PC-3 (cell line): ENCODE measurements at regions of chr5 and their contacts with region 1.

Region 1: GRCh38 chr5:113294311-113295110 is 140.3 kb downstream of the TSSK1B start:
- DNase-seq: peak; percentile 73
- ATAC-seq: peak; percentile 90
- H3K4me3 ChIP-seq: peak overlapping the region; percentile 73
- H3K27ac ChIP-seq: no peak overlapping the region
- H3K4me1 ChIP-seq: peaks cover 7% of the 10 kb centered on the region; the same call in 1 of the 2 replicates
- H3K27me3 ChIP-seq: no peaks in the 10 kb centered on the region
- CTCF ChIP-seq: peak; percentile 40; the same call in 1 of the 2 replicates

Region 2: GRCh38 chr5:113232667-113233066 is 61.8 kb before region 1 on chr5:
- CTCF ChIA-PET with region 1: no interaction called
- POLR2A ChIA-PET with region 1: no interaction called
- intact Hi-C with region 1: loop called (anchors 5 kb)
- DNase-seq: peak; percentile 21
- ATAC-seq: 0 out of 2 replicates have a peak, but pooled peaks have one; percentile 15
- H3K4me3 ChIP-seq: no peak overlapping the region
- H3K27ac ChIP-seq: no peak overlapping the region
- H3K4me1 ChIP-seq: peaks cover 29% of the 10 kb centered on the region
- H3K27me3 ChIP-seq: 0 out of 2 replicates have a peak, but pooled peaks cover 5% of the 10 kb centered on the region
- CTCF ChIP-seq: no peak

Region 3: GRCh38 chr5:113311301-113311700 is 16.8 kb after region 1 on chr5:
- CTCF ChIA-PET with region 1: no interaction called
- POLR2A ChIA-PET with region 1: interaction called, 14 read pairs
- intact Hi-C with region 1: no loop called
- DNase-seq: no peak
- ATAC-seq: no peak
- H3K4me3 ChIP-seq: no peak overlapping the region
- H3K27ac ChIP-seq: no peak overlapping the region
- H3K4me1 ChIP-seq: peaks cover 13% of the 10 kb centered on the region
- H3K27me3 ChIP-seq: no peaks in the 10 kb centered on the region
- CTCF ChIP-seq: no peak

Region 4: GRCh38 chr5:114744406-114744805 is 1449.9 kb after region 1 on chr5:
- CTCF ChIA-PET with region 1: no interaction called
- POLR2A ChIA-PET with region 1: interaction called, 18 read pairs
- intact Hi-C with region 1: no loop called
- DNase-seq: peak; percentile 19
- ATAC-seq: no peak
- H3K4me3 ChIP-seq: no peak overlapping the region
- H3K27ac ChIP-seq: no peak overlapping the region
- H3K4me1 ChIP-seq: no peaks in the 10 kb centered on the region
- H3K27me3 ChIP-seq: no peaks in the 10 kb centered on the region
- CTCF ChIP-seq: no peak